Activated T-helper 2 cell treated with anti-CD3 and anti-CD28 coated beads, Interferon-gamma antibody, Interleukin-2, Interleukin-4, amounts not matched to agents 10 μg/mL and 5 μg/mL and 100 μg/mL, durations not matched to agents 14 hours and 24 hours and 36 hours (primary cell): ENCODE measurements at regions of chr2 and their contacts with region 1.

Region 1: DNA sequence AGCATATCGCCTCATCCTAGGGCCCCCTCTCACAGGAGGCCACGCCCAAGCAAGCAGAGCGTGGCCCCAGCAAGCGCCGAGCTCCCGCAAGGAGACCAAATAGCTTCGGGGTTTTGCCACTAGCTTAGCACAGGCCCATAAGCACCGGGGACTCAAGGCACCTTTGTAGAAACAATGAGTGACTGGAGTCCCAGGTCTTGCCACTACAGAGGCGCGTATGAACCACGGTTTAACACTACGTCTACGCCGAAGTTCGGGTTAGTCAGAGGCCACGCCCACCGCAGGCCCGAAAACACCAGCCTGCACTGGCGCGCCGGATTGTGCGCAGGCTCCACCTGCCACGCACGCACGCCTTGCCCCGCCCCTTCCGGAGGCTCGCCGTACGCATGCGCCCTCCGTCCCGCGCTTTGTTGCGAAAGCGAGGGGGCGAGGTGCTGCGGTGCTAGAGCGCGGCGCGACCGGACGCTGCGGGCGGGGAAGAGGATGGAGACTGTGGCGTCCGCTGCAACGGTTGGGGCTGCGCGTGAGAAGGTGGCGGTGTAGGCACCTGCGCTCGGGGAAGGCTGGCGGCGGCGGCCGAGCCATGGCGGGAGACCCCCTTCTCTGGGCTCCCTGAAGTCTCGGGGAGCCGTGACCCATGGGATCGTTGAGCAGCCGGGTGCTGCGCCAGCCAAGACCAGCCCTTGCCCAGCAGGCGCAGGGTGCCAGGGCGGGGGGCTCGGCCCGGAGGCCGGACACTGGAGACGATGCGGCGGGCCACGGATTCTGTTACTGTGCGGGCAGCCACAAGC is at the start of gene GMCL1:
- DNase-seq: peak; percentile 99
- H3K4me3 Mint-ChIP-seq: peak within 1 kb of the TSS; percentile 84
- H3K27ac Mint-ChIP-seq: peak within 1 kb of the TSS; percentile 93
- H3K4me1 Mint-ChIP-seq: peaks cover 42% of the 10 kb centered on the region
- H3K27me3 Mint-ChIP-seq: no peaks in the 10 kb centered on the region
- total RNA-seq, gene GMCL1: 29.2 and 29.3 TPM in 2 replicates

Region 2: DNA sequence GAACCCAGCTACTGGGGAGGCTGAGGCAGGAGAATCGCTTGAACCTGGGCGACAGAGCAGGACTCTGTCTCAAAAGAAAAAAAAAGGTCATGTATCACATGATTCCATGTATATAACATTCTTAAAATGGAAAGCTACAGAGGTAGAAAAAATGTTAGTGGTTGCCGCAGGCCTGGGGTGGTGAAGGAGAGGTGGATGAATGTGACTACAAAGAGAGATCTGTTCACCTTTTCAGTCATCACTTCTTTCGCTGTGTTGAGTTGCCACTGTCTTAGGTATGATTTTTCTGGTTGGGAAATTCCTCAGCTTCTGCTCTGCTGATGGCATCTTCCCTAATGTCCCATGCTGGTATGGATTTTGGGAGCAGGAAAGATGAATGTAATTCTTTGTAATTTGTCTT is 59.0 kb after region 1 on chr2:
- intact Hi-C with region 1: loop called (anchors 5 kb)
- DNase-seq: no peak
- H3K4me3 Mint-ChIP-seq: no peak overlapping the region
- H3K27ac Mint-ChIP-seq: no peak overlapping the region
- H3K4me1 Mint-ChIP-seq: peaks cover 6% of the 10 kb centered on the region
- H3K27me3 Mint-ChIP-seq: no peaks in the 10 kb centered on the region

Region 3: DNA sequence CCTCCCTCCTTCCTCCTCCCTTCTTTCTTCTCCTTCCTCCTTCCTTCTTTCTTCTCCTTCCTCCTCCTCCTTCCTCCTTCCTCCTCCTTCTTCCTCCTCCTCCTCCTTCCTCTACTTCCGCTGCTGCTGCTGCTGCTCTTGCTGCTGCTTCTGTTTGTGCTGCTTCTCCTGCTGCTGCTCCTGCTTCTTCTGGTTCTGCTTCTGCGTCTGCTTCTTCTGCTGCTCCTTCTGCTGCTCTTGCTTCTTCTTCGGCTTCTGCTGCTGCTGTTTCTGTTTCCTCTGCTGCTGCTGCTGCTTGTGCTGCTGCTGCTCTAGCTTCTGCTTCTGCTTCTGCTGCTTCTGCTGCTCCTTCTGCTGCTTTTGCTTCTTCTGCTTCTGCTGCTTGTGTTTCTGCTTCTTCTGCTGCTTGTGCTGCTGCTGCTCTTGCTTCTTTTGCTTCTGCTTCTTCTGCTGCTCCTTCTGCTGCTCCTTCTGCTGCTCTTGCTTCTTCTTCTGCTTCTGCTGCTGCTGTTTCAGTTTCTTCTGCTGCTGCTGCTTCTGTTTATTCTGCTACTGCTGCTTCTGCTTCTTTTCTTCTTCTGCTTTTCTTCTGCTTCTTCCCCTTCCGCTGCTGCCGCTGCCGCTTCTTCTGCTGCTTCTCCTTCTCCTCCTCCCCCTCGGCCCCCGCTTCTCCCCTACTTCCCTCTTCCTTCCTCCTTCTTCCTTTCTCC is 72.9 kb after region 1 on chr2:
- intact Hi-C with region 1: no loop called
- DNase-seq: no peak
- H3K4me3 Mint-ChIP-seq: peak overlapping the region; percentile 84
- H3K27ac Mint-ChIP-seq: peak overlapping the region; percentile 86
- H3K4me1 Mint-ChIP-seq: peaks cover 39% of the 10 kb centered on the region
- H3K27me3 Mint-ChIP-seq: no peaks in the 10 kb centered on the region